ENCODE measurements at regions of chr1 and their contacts with region 1.

Region 1: DNA sequence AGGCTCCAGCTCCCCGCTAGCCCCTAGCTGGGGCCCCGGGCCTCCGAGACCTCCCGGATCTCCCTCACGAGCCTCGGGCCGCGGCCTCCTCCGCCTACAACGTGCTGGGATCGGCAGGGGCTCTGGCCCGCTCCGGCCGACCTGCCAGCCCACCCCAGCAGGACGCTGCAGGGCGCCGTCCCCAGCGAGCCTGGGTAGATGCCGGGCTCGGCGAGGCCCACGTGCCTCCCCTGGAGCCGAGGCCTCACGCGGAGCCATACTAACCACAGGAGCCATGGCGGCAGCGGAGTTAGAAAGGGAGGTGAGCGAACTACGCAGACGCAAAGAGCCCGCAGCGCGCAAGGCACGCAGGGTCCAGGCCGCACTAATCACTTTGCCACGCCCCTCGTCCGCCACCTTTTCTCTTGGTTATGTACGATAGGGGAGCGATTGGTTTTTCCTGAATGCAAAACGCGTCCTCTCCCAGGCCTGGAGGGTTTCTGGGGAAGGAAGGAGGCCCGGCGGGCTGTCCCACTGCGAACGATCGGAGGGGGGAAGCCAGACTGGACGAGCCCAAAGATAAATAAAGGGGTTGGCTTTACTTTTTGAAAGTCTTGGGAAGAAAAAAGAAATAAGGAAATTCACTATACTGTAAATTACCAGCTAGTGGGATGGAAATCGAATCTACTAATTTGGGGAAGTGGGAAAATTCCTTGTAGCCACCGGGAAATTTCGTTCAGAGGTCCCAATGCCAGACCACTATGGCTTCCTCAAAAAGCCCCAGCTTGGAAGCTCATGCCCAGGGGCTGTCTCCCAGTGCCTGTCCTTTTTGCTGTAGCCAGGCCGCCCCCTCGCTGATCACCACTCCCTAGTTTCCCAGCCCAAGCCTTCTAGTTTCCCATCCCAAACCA is at the start of gene RPL22:
- ATAC-seq: peak; percentile 91 to 98 (median 97)
- H3K4me3 ChIP-seq: peak within 1 kb of the TSS; percentile 71 to 98 (median 89)
- H3K27ac ChIP-seq: peak within 1 kb of the TSS; percentile 67 to 90
- H3K4me1 ChIP-seq: peaks cover 17 to 19% of the 10 kb centered on the region in 2 donors
- total RNA-seq, gene RPL22: 340 to 786 (median 466) TPM

Region 2: DNA sequence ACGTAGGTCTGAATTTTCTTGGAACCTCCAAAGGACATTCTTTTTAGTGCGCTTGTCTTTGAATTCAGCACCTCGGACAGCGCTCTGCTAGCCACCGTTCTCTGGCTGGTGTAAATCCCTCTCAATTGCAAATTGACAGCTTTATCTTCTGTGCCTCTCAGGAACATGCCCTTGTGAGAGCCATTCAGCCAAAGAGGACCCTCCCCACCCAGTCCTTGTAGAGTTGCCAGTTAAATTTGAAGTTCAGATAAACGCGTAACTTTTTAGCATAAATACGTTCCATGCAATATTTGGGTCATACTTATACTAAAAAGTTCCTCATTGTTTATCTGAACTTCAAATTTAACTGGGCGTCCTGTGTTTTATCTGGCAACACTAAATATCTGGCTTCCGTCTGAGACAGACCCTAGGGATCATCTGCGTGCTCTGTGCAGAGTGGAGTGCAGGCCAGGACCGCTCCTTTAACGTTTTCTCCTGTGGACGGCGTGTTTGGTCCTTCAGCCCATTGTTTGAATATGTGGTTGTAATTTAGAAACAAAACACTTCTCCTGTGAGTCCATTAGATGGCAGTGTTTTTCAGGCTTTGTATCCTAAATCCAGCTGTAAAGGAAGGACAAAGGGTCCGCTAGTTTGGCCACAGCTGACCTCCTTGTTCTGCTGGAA is 146.9 kb before region 1 on chr1:
- in situ Hi-C with region 1: loop called in 3 of 9 experiments (anchors 25 kb)
- ATAC-seq: peak; percentile 72 to 89 (median 80)
- H3K4me3 ChIP-seq: no peak overlapping the region
- H3K27ac ChIP-seq: no peak overlapping the region
- H3K4me1 ChIP-seq: peaks cover 22% of the 10 kb centered on the region in 2 donors